Caco-2 (cell line): ENCODE measurements at regions of chr2 and their contacts with region 1.

Region 1: DNA sequence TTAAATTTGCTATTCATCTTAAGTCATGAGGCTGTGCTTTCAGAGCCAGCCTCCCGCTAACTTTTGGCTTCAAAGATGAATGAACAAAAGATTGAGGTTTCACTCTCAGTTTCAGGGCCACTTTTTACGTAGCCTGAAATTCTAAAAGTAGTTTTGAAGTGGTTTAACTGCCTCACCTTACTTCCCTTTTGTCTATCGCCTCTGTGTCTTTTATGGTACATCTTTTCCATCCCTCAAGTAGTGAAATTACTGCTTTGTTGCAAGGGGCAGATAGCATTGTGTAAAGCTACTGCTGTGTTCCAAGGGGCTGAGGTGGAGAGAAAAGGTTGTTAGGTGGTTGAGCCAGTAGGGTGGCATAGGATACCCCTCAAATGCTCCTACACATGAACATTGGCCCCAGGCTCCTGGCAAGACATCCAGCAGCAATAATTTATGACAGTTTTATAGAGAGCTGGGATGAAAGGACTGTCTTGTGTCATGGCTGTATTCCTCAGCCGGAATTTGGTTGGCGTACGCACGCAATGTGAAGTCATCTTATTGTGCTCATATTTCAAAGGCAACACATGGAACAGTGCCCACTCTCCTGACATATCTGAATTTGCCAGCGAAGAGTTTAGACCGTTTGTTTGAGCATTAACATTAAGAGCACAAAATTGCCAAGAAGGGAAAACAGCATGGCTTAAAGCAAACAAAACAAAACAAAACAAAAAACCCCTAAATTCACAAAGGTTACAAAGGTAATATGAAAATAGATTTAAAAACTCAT is 32.2 kb downstream of the QPCT start:
- DNase-seq: no peak
- H3K4me3 ChIP-seq: no peak overlapping the region
- H3K4me3 Mint-ChIP-seq: no peak overlapping the region
- H3K27ac Mint-ChIP-seq: no peak overlapping the region
- H3K4me1 ChIP-seq: no peaks in the 10 kb centered on the region
- H3K4me1 Mint-ChIP-seq: peaks cover 6% of the 10 kb centered on the region
- H3K27me3 ChIP-seq: no peaks in the 10 kb centered on the region; the same call in 1 of the 2 replicates
- H3K27me3 Mint-ChIP-seq: peaks cover 4% of the 10 kb centered on the region
- CTCF ChIP-seq: no peak

Region 2: GRCh38 chr2:37301408-37301807 is 75.2 kb before region 1 on chr2:
- CTCF ChIA-PET with region 1: no interaction called
- POLR2A ChIA-PET with region 1: no interaction called
- intact Hi-C with region 1: loop called (anchors 2 kb)
- DNase-seq: no peak
- H3K4me3 ChIP-seq: no peak overlapping the region
- H3K4me3 Mint-ChIP-seq: no peak overlapping the region
- H3K27ac Mint-ChIP-seq: no peak overlapping the region
- H3K4me1 ChIP-seq: no peaks in the 10 kb centered on the region
- H3K4me1 Mint-ChIP-seq: no peaks in the 10 kb centered on the region
- H3K27me3 ChIP-seq: no peaks in the 10 kb centered on the region
- H3K27me3 Mint-ChIP-seq: no peaks in the 10 kb centered on the region
- CTCF ChIP-seq: no peak